ENCODE measurements at regions of chr11 and their contacts with region 1.

Region 1: DNA sequence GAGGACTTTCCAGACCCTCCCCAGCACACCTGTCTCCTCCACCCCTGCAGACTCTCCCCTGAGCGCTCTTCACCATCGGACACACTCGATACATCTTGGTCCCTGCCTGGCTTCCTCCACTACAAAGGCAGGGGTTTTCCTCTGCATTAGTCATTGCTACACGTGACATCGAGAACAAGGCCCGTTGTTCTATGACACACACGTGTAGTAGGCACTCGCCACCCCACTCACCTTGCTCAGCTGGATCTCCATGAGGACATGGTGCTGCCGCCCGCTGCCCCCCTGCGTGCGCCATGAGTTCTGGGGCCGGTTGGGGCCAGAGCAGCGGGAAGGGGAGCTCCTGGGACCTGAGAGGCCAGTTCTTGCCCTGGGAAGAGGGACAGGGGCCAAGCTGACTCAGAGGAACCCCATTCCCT is 16.7 kb downstream of the ATG2A start:
- DNase-seq: peak; percentile 59
- ATAC-seq: peak; percentile 71
- H3K4me3 ChIP-seq: no peak overlapping the region
- H3K27ac ChIP-seq: peak overlapping the region; percentile 21; the same call in 1 of the 2 replicates
- H3K4me1 ChIP-seq: peaks cover 7% of the 10 kb centered on the region; the same call in 1 of the 2 replicates
- H3K27me3 ChIP-seq: no peaks in the 10 kb centered on the region
- CTCF ChIP-seq: no peak

Region 2: GRCh38 chr11:64887757-64888405 is 12.4 kb before region 1 on chr11:
- CTCF ChIA-PET with region 1: interaction called, 14 read pairs
- POLR2A ChIA-PET with region 1: no interaction called
- intact Hi-C with region 1: no loop called
- DNase-seq: peak; percentile 79
- ATAC-seq: peak; percentile 82
- H3K4me3 ChIP-seq: no peak overlapping the region; the same call in 1 of the 2 replicates
- H3K27ac ChIP-seq: no peak overlapping the region
- H3K4me1 ChIP-seq: peaks cover 24% of the 10 kb centered on the region
- H3K27me3 ChIP-seq: no peaks in the 10 kb centered on the region
- CTCF ChIP-seq: peak; percentile 95